Esophagus squamous epithelium (tissue), 5 donors: ENCODE measurements at regions of chr6 and their contacts with region 1.

Region 1: DNA sequence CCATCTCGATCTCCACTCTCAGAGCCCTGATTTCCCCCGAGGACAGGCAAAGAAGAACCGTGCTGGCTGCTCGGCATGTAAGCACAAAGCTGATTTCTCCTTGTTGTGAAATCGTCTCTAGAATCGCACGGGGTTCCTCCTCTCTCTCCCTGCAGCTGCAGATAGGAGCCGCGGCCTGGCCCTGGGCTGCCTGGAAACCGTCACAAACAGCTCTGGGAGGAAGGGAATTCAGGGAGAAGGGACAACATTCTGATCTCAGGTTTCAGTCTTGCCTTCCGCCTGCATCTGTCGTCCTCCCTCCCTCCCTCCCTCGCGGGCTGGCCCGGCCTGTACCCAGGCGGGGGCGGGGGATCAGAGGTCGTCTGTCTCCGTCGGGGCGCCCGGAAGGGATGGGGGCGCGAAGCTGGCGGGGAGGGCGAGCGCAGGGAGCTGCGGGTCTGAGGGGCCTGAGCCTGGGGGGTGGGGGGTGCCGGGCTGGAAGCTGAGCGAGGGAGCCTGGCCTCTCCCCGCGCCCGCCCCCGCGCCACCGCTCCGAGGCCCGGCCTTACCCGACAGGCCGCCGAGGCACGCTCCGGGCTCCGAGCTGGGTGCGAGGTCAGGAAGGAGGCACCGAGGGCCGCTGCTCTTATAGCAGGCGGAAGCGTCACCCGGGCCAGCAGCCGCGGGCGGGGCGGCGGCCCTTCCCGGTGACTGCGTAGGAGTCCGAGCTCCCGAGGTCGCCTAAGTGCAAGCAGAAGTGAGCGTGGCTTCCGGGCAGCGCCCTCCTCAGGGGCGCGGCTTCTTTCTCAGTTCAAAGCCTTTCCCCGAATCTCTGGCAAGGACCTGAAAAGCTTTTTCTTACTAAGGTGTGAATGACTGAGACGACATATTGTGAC is at the start of gene SERPINB1:
- DNase-seq: peak; percentile 75
- H3K4me3 ChIP-seq: peak within 1 kb of the TSS; percentile 63 to 74 (median 72)
- H3K27ac ChIP-seq: peak within 1 kb of the TSS; percentile 97 to 98 (median 98)
- H3K4me1 ChIP-seq: peaks cover 4 to 77% (median 38%) of the 10 kb centered on the region in 3 donors
- H3K27me3 ChIP-seq: no peaks in the 10 kb centered on the region
- CTCF ChIP-seq: peak in 2 of 6 experiments; percentile 11 to 15
- POLR2A ChIP-seq: peak in 3 of 4 donors; percentile 43 to 84 (median 82)
- total RNA-seq, gene SERPINB1: 284 to 1,204 (median 702) TPM

Region 2: DNA sequence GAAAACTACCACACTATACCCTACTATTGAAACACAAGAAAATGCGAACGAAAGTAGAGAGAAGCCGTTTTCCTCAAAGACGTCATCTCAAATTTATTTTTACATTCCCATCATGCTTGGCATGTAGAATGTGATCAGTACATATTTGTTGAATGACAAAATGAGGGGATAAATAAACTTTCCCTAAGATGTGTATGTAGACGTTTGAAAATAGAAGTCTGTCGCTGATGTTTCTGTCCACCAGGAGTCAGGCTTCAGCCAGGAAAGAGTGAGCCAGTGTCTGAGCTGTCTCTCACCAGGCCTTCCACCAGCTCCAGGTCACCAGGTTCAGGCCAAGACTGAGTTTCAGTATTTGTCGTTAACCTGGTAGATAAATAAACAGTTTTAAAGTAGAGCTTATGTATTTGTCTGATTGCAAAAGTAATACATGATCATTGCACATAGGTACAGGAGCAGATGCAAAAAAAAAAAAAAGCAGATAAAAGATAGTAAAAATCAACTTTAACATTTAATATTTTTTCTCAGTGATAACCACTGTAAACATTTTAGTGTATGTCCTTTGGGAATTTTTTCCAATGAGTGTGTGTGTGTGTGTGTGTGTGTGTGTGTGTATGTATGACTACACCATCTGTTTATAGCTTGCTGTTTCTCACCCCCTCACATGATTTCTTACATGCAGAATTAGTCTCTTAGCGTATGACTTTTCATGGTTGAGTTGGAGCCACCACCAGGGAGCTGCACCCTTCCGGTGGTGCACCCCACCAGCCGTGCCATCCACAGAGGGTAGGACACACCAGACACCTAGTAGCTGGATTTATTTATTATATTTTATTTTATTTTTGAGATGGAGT is 50.2 kb before region 1 on chr6:
- intact Hi-C with region 1: loop called (anchors 10 kb)
- DNase-seq: no peak
- H3K4me3 ChIP-seq: peak overlapping the region in 1 of 4 donors; percentile 23
- H3K27ac ChIP-seq: peak overlapping the region; percentile 58 to 89 (median 79)
- H3K4me1 ChIP-seq: peaks cover 19 to 51% (median 29%) of the 10 kb centered on the region in 3 donors
- H3K27me3 ChIP-seq: no peaks in the 10 kb centered on the region
- CTCF ChIP-seq: peak; percentile 35 to 89 (median 80)
- POLR2A ChIP-seq: no peak

Region 3: GRCh38 chr6:3239110-3239830 is 397.8 kb after region 1 on chr6:
- intact Hi-C with region 1: no loop called
- DNase-seq: no peak
- H3K4me3 ChIP-seq: no peak overlapping the region
- H3K27ac ChIP-seq: no peak overlapping the region
- H3K4me1 ChIP-seq: no peaks in the 10 kb centered on the region
- H3K27me3 ChIP-seq: peaks cover 0 to 33% (median 0%) of the 10 kb centered on the region in 4 donors
- CTCF ChIP-seq: peak in 4 of 6 experiments; percentile 10 to 40 (median 13)
- POLR2A ChIP-seq: no peak